GM18951 (cell line): ENCODE measurements at regions of chr13 and their contacts with region 1.

Region 1: DNA sequence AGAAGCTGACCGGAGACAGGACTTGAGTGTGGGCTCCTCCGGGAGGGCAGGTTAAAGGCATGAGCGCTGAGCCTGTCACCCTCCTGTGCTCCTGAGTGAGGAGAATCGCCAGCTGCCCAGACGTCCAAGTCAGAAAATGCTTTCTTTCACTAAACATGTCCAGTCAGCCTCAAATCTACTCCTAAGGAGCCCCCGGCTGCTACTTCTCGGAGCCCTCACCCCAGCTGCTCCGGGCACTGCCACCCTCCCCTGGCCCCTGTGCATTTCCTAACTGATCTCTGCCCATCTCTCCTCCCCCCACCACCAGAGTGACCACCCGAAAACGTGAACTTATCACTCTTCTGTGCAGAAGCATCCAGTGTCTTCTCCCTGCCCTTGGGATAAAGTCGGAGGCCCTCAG is 277.5 kb upstream of the SOX1 start:
- POLR2A ChIP-seq: no peak

Region 2: GRCh38 chr13:110841846-110842245 is 947.6 kb before region 1 on chr13:
- in situ Hi-C with region 1: no loop called
- POLR2A ChIP-seq: no peak

Region 3: GRCh38 chr13:111572956-111573761 is 216.3 kb before region 1 on chr13:
- in situ Hi-C with region 1: no loop called
- POLR2A ChIP-seq: no peak

Region 4: DNA sequence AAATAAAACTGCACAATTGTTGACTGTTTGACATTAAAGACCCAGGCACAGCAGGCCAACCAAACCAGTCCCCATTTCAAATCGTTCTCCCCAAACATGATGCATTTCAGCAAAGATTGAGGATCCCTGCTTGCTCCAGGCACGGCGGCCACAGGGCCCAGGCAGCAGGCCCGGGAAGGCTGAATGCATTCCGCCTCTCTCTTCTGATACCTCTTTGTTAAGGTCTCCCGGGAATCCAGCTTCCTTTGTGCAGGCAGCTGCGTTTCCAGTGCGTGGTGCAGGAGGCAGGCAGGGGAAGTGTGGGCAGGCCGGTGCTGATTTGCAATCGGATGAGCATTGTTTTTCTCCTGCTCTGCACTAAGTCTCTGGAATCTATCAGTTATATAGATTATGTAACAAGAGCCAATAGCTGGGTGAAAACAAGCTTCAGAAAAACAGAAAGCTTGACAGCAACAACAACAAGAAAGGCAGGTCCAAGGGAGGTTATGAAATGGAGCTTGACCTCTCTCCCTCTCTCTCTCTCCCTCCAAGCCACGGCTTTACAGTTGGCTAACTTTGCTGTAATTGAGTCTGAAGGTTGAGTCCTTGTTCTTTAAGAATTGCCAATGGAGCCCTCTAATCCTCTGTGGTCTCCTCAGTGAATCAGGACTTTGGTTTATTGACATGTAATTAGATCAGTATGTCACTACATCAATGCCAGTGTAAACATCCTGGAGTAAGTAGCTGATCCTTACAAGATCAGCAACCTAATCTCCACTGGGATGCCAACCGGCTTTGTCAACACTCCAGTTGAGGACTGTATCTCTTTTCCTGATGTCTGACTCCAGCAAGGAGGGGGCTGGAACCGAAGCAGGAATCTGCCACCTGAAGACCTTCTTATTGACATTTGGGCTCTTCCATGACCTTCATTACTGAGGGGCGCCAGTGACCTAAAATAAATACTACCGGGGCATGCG is 131.0 kb before region 1 on chr13:
- in situ Hi-C with region 1: loop called (anchors 25 kb)
- POLR2A ChIP-seq: no peak